ENCODE measurements at regions of chr18 and their contacts with region 1.

Region 1: DNA sequence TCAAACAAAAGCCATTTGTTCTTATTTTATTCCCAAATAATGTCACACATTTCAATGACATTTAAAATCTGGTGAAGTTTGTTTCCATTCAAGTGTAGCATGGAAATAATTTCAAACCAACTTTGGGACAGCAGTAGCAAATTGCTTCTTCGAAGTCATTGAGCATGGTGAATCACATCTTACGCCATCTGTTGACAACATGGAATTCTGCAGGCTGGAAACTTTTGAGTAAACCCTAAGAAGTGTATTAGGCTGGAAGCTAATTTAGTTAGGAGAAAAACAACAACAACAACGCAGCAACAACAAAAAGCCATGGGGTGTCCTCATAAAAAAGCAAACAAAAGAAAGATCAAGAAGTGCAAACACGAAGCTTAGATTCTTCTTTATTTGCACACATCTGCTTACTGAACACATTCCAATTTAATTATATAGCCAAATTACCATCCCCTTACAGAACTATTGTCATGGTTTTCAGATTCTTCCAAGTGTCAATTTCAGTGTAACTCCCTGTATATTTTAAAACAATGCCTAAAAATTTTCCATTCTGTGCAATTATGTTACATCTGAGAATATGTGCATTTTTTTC is 659.0 kb upstream of the CDH7 start:
- DNase-seq: no peak
- H3K4me3 ChIP-seq: no peak overlapping the region
- H3K27ac ChIP-seq: no peak overlapping the region
- H3K4me1 ChIP-seq: no peaks in the 10 kb centered on the region
- H3K27me3 ChIP-seq: no peaks in the 10 kb centered on the region
- CTCF ChIP-seq: peak in 4 of 5 experiments; percentile 30 to 47 (median 34)
- EP300 ChIP-seq: no peak
- POLR2A ChIP-seq: no peak

Region 2: DNA sequence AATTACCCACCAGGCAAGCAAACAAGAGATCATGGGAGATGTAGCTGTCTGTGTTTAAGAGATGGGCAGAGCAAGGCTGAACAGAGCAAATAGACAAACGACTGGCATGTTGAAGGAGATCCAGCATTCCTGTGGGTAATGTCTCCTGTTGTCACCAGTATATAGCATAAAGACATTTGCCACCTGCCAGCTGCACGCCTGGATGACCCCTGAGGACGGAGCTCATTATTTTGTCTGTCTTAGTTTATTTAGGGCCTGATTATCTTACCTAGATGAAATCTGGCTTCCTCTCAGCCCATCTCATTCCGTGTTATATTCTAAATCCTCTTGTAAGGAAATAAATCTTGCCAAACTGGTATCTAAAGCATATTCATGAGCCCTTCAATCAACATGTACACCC is 432.6 kb before region 1 on chr18:
- in situ Hi-C with region 1: loop called in 1 of 4 experiments (anchors 25 kb)
- intact Hi-C with region 1: no loop called
- DNase-seq: no peak
- H3K4me3 ChIP-seq: no peak overlapping the region
- H3K27ac ChIP-seq: no peak overlapping the region
- H3K4me1 ChIP-seq: no peaks in the 10 kb centered on the region
- H3K27me3 ChIP-seq: no peaks in the 10 kb centered on the region
- CTCF ChIP-seq: no peak
- EP300 ChIP-seq: no peak
- POLR2A ChIP-seq: no peak

Measured in transverse colon (tissue), 4 donors.